Lower leg skin (tissue), 4 donors: ENCODE measurements at regions of chr10 and their contacts with region 1.

Region 1: GRCh38 chr10:95693668-95694534 is at the start of gene TCTN3:
- DNase-seq: peak; percentile 98 to 99
- H3K4me3 ChIP-seq: peak within 1 kb of the TSS; percentile 73
- CTCF ChIP-seq: peak in 2 of 3 donors; percentile 97 to 98
- POLR2A ChIP-seq: no peak
- total RNA-seq, gene TCTN3: 13.6 to 23.1 (median 16.3) TPM

Region 2: GRCh38 chr10:95552679-95553342 is 141.1 kb before region 1 on chr10:
- intact Hi-C with region 1: no loop called
- DNase-seq: no peak
- H3K4me3 ChIP-seq: no peak overlapping the region
- CTCF ChIP-seq: no peak
- POLR2A ChIP-seq: no peak

Region 3: GRCh38 chr10:95841661-95842498 is 148.0 kb after region 1 on chr10:
- intact Hi-C with region 1: loop called (anchors 10 kb)
- DNase-seq: peak in 1 of 2 donors; percentile 63
- H3K4me3 ChIP-seq: no peak overlapping the region
- CTCF ChIP-seq: no peak
- POLR2A ChIP-seq: no peak

Region 4: DNA sequence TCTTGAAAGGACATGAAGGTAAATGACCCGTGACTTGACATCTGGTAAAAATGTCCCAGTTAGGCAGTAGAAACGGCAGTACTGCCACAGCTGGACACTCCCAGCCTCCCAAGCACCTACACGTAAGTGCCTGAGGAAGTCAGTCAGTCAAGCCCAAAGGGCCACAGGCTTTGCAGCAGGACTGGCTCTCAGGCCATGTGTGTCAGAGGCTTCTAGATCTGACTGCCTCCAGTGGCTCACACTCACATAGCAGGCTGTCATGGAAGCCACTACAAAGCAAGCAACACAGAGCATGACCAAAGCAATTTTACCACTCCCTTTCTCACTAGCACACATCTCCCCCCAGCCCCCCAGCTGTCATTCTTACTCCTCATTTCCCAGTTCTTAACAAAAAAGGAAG is 331.7 kb after region 1 on chr10:
- intact Hi-C with region 1: no loop called
- DNase-seq: no peak
- H3K4me3 ChIP-seq: no peak overlapping the region
- CTCF ChIP-seq: no peak
- POLR2A ChIP-seq: no peak